ENCODE measurements at regions of chr17 and their contacts with region 1.

Region 1: GRCh38 chr17:29617125-29617480 is 5.6 kb downstream of the CORO6 start:
- DNase-seq: peak; percentile 89
- H3K4me3 Mint-ChIP-seq: peak overlapping the region; percentile 74
- H3K27ac Mint-ChIP-seq: peak overlapping the region; percentile 84
- H3K4me1 Mint-ChIP-seq: peaks cover 42% of the 10 kb centered on the region
- H3K27me3 Mint-ChIP-seq: no peaks in the 10 kb centered on the region

Region 2: GRCh38 chr17:29195465-29196081 is 421.5 kb before region 1 on chr17:
- intact Hi-C with region 1: no loop called
- DNase-seq: no peak
- H3K4me3 Mint-ChIP-seq: no peak overlapping the region
- H3K27ac Mint-ChIP-seq: no peak overlapping the region
- H3K4me1 Mint-ChIP-seq: no peaks in the 10 kb centered on the region
- H3K27me3 Mint-ChIP-seq: peaks cover 20% of the 10 kb centered on the region

Region 3: DNA sequence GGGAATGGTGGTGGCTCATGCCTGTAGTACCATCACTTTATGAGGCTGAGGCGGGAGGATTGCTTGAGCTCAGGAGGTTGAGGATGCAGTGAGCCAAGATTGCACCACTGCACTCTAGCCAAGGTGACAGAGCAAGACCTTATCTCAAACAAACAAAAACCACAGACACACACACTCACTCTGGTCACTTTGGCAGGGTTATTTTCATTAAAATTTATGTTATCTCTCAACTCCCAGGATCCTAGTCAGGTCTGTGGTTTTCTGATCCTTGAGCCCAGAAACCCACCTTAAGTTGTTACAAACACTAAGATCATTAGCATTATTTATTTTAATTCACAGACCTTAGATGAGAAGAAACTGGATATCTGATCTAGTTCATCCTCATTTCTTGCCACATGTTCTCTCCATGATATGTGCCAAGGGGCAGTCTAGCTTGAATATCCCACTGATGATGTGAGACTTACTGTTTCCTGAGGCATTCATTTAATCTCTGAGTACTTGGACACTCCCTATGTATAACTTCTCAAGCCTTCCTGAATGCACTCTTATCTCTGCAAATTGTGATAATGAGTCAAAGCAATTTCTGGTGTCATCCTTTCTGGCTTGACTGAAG is 59.9 kb before region 1 on chr17:
- intact Hi-C with region 1: no loop called
- DNase-seq: no peak
- H3K4me3 Mint-ChIP-seq: no peak overlapping the region
- H3K27ac Mint-ChIP-seq: no peak overlapping the region
- H3K4me1 Mint-ChIP-seq: peaks cover 23% of the 10 kb centered on the region
- H3K27me3 Mint-ChIP-seq: no peaks in the 10 kb centered on the region

Region 4: DNA sequence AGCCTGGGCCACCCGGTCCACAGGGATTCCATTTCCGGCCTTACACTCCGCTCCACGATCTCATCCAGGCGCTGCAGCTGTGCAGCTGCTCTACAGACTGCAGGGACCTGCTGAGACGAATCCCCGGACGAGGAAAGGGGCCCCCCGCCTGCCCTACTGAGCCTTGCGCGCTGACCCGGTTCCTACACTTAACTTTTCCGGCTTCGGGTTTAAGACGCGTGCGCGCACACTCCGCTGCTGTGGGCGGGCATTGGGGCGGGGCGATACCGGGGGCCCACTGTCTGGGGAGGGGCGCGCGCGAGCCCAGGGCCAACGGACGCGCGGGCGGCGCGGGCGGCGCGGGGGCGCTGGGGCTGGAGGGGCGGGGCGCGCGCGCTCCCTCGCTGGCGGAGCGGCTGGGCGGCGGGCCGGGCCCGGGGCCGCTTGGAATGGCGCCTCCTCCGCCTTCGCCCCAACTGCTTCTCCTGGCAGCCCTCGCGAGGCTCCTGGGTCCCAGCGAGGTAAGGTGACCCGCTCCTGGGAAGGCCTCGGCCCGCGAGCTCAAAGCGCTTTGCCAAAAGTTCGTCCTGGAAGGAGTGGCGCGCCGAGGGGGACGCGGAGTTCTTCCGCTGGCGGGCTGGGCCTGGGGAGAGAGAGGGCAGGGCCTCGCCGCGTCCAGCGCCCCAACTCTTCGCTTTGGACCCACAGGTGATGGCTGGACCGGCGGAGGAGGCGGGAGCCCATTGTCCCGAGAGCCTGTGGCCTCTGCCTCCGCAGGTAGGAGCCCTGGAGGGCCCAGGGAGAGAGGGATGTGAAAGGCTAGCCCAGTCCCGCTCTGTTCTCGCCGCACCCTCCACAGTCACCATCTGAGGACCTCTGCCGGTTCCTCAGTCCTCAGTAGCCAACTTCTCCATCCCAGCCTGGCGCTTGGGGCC is 48.5 kb before region 1 on chr17 and contains the start of gene TP53I13:
- intact Hi-C with region 1: loop called (anchors 1 kb)
- DNase-seq: peak; percentile 85
- H3K4me3 Mint-ChIP-seq: peak within 1 kb of the TSS; percentile 94
- H3K27ac Mint-ChIP-seq: peak within 1 kb of the TSS; percentile 96
- H3K4me1 Mint-ChIP-seq: peaks cover 25% of the 10 kb centered on the region
- H3K27me3 Mint-ChIP-seq: no peaks in the 10 kb centered on the region
- total RNA-seq, gene TP53I13: 78.2 and 84.8 TPM in 2 replicates

Region 5: GRCh38 chr17:29589524-29590410 is 27.3 kb before region 1 on chr17 and contains the start of gene GIT1:
- intact Hi-C with region 1: loop called (anchors 1 kb)
- DNase-seq: peak; percentile 81
- H3K4me3 Mint-ChIP-seq: peak within 1 kb of the TSS; percentile 87
- H3K27ac Mint-ChIP-seq: peak within 1 kb of the TSS; percentile 93
- H3K4me1 Mint-ChIP-seq: peaks cover 52% of the 10 kb centered on the region
- H3K27me3 Mint-ChIP-seq: no peaks in the 10 kb centered on the region
- total RNA-seq, gene GIT1: 67.3 and 72.4 TPM in 2 replicates

Region 6: GRCh38 chr17:29760761-29761696 is 143.9 kb after region 1 on chr17:
- intact Hi-C with region 1: loop called (anchors 2 kb)
- DNase-seq: peak; percentile 90
- H3K4me3 Mint-ChIP-seq: peak overlapping the region; percentile 97
- H3K27ac Mint-ChIP-seq: peak overlapping the region; percentile 96
- H3K4me1 Mint-ChIP-seq: peaks cover 27% of the 10 kb centered on the region
- H3K27me3 Mint-ChIP-seq: no peaks in the 10 kb centered on the region

Region 7: DNA sequence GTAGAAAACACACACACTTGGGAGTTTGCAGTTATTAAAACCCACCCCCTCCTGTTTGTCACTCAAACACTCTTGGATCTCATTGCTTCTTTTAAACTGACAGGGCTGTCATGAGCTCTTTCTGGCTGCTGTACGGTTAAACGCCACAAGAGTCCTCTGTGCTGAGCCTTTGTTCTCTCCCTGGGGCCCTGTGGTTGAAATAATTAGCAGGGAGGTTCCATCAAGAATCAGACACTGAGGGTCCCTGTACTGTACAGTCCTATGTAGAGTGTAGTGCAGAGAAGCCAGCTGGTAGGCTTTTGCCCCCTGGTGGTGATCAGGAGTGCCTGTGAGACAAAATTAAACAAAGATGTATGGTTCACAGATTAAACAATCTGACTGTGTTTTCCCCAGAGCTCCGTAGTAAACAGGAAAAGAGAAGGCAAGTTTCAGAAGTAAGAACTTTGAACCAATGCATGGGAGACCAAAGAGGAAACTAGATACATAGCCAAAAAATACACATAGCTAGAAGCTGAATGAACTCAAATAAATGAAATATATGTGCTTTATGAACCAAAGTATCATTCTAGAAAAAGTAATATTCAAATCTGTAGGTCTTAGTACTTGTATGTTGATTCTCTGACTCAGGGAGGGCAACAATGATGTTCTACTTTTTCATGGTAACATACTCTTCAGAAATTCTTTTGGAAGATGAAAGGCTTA is 314.3 kb after region 1 on chr17:
- intact Hi-C with region 1: loop called (anchors 5 kb)
- DNase-seq: peak; percentile 61
- H3K4me3 Mint-ChIP-seq: no peak overlapping the region
- H3K27ac Mint-ChIP-seq: no peak overlapping the region
- H3K4me1 Mint-ChIP-seq: peaks cover 16% of the 10 kb centered on the region
- H3K27me3 Mint-ChIP-seq: no peaks in the 10 kb centered on the region

Measured in activated T-helper 2 cell treated with anti-CD3 and anti-CD28 coated beads, Interferon-gamma antibody, Interleukin-2, Interleukin-4, amounts not matched to agents 10 μg/mL and 5 μg/mL and 100 μg/mL, durations not matched to agents 14 hours and 24 hours and 36 hours (primary cell).